Activated CD4-positive, alpha-beta memory T cell treated with anti-CD3 and anti-CD28 coated beads for 36 hours (primary cell): ENCODE measurements at regions of chr5 and their contacts with region 1.

Region 1: GRCh38 chr5:56095579-56096102 is 100.9 kb upstream of the IL6ST start:
- DNase-seq: no peak
- H3K4me3 Mint-ChIP-seq: peak overlapping the region; percentile 1
- H3K27ac Mint-ChIP-seq: peak overlapping the region; percentile 63
- H3K4me1 Mint-ChIP-seq: peaks cover 83% of the 10 kb centered on the region
- H3K27me3 Mint-ChIP-seq: no peaks in the 10 kb centered on the region

Region 2: GRCh38 chr5:55668356-55668755 is 427.3 kb before region 1 on chr5:
- CTCF ChIA-PET with region 1: no interaction called
- POLR2A ChIA-PET with region 1: no interaction called
- intact Hi-C with region 1: no loop called
- DNase-seq: no peak
- H3K4me3 Mint-ChIP-seq: no peak overlapping the region
- H3K27ac Mint-ChIP-seq: no peak overlapping the region
- H3K4me1 Mint-ChIP-seq: peaks cover 2% of the 10 kb centered on the region
- H3K27me3 Mint-ChIP-seq: no peaks in the 10 kb centered on the region

Region 3: GRCh38 chr5:56012281-56012963 is 83.2 kb before region 1 on chr5:
- CTCF ChIA-PET with region 1: no interaction called
- POLR2A ChIA-PET with region 1: interaction called, 5 read pairs
- intact Hi-C with region 1: loop called (anchors 1 kb)
- DNase-seq: peak; percentile 61
- H3K4me3 Mint-ChIP-seq: peak overlapping the region; percentile 31
- H3K27ac Mint-ChIP-seq: peak overlapping the region; percentile 81
- H3K4me1 Mint-ChIP-seq: peaks cover 30% of the 10 kb centered on the region
- H3K27me3 Mint-ChIP-seq: no peaks in the 10 kb centered on the region

Region 4: DNA sequence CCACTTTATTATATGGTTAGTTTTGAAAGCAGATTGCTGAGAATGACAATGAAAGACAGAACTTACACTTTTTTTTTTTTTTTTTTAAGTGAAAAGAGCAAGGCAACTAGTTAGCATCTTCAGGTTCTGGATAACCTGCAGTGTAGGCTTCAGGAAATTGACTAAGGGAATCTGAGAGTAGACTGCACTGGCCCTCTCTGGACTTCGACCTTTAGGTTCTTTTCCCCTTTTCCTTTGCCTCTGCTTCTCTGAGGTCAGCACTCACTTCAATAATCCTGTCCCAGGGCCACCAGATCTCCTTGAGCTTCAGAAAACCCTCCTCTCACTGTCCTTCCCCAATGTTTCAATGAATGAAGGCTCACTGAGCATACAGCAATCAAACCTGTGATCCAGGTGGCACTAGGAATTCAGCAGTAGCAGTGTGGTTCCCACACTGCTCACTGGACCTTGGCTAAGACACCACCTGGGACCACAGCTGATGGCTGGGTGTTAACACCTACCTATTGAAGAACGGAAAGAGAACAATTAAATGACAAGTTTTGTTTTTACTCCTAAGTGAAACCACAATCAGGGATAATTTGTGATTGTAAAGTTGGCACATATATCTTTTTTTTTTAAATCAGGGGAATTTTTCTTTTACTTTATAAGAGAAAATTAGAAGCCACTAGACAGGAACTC is 15.1 kb before region 1 on chr5:
- CTCF ChIA-PET with region 1: no interaction called
- POLR2A ChIA-PET with region 1: interaction called, 5 read pairs
- intact Hi-C with region 1: loop called (anchors 2 kb)
- DNase-seq: peak; percentile 50
- H3K4me3 Mint-ChIP-seq: peak overlapping the region; percentile 2
- H3K27ac Mint-ChIP-seq: peak overlapping the region; percentile 71
- H3K4me1 Mint-ChIP-seq: peaks cover 47% of the 10 kb centered on the region
- H3K27me3 Mint-ChIP-seq: no peaks in the 10 kb centered on the region

Region 5: GRCh38 chr5:56142620-56143372 is 47.2 kb after region 1 on chr5:
- CTCF ChIA-PET with region 1: no interaction called
- POLR2A ChIA-PET with region 1: interaction called, 3 read pairs
- intact Hi-C with region 1: loop called (anchors 2 kb)
- DNase-seq: peak; percentile 46
- H3K4me3 Mint-ChIP-seq: no peak overlapping the region
- H3K27ac Mint-ChIP-seq: peak overlapping the region; percentile 34
- H3K4me1 Mint-ChIP-seq: peaks cover 57% of the 10 kb centered on the region
- H3K27me3 Mint-ChIP-seq: no peaks in the 10 kb centered on the region

Region 6: GRCh38 chr5:56190497-56190896 is 94.9 kb after region 1 on chr5:
- CTCF ChIA-PET with region 1: no interaction called
- POLR2A ChIA-PET with region 1: no interaction called
- intact Hi-C with region 1: no loop called
- DNase-seq: peak; percentile 48
- H3K4me3 Mint-ChIP-seq: peak overlapping the region; percentile 18
- H3K27ac Mint-ChIP-seq: no peak overlapping the region
- H3K4me1 Mint-ChIP-seq: peaks cover 8% of the 10 kb centered on the region
- H3K27me3 Mint-ChIP-seq: no peaks in the 10 kb centered on the region